ENCODE measurements at regions of chr20 and their contacts with region 1.

Region 1: GRCh38 chr20:46363800-46364634 is 42.4 kb downstream of the ELMO2 start:
- DNase-seq: peak; percentile 72 to 93 (median 81)
- ATAC-seq: peak; percentile 78 to 81 (median 79)
- H3K4me3 ChIP-seq: peak overlapping the region; percentile 81 to 88
- H3K4me3 Mint-ChIP-seq: peak overlapping the region; percentile 86 to 94 (median 92)
- H3K27ac ChIP-seq: peak overlapping the region; percentile 97
- H3K27ac Mint-ChIP-seq: peak overlapping the region; percentile 93 to 97
- H3K4me1 ChIP-seq: peaks cover 46 to 75% of the 10 kb centered on the region in 2 experiments
- H3K4me1 Mint-ChIP-seq: peaks cover 73 to 86% (median 84%) of the 10 kb centered on the region in 3 donors
- H3K27me3 ChIP-seq: no peaks in the 10 kb centered on the region
- H3K27me3 Mint-ChIP-seq: no peaks in the 10 kb centered on the region

Region 2: GRCh38 chr20:46283426-46284039 is 80.5 kb before region 1 on chr20:
- CTCF ChIA-PET with region 1: no interaction called
- POLR2A ChIA-PET with region 1: no interaction called
- DNase-seq: no peak
- ATAC-seq: no peak
- H3K4me3 ChIP-seq: no peak overlapping the region
- H3K4me3 Mint-ChIP-seq: no peak overlapping the region
- H3K27ac ChIP-seq: no peak overlapping the region
- H3K27ac Mint-ChIP-seq: no peak overlapping the region
- H3K4me1 ChIP-seq: no peaks in the 10 kb centered on the region
- H3K4me1 Mint-ChIP-seq: no peaks in the 10 kb centered on the region
- H3K27me3 ChIP-seq: peaks cover 0 to 44% of the 10 kb centered on the region in 2 experiments
- H3K27me3 Mint-ChIP-seq: peaks cover 20 to 52% of the 10 kb centered on the region in 2 donors

Region 3: GRCh38 chr20:46406199-46406985 is 42.4 kb after region 1 on chr20 and contains the start of gene ELMO2:
- CTCF ChIA-PET with region 1: interaction called in 1 of 2 experiments, 21 read pairs
- POLR2A ChIA-PET with region 1: interaction called, 4 to 7 read pairs
- DNase-seq: peak; percentile 90 to 99 (median 97)
- ATAC-seq: peak; percentile 91 to 93 (median 91)
- H3K4me3 ChIP-seq: peak within 1 kb of the TSS; percentile 83 to 87
- H3K4me3 Mint-ChIP-seq: peak within 1 kb of the TSS; percentile 87 to 96 (median 94)
- H3K27ac ChIP-seq: peak within 1 kb of the TSS; percentile 88
- H3K27ac Mint-ChIP-seq: peak within 1 kb of the TSS; percentile 91 to 94
- H3K4me1 ChIP-seq: peaks cover 36 to 60% of the 10 kb centered on the region in 2 experiments
- H3K4me1 Mint-ChIP-seq: peaks cover 68 to 73% (median 71%) of the 10 kb centered on the region in 3 donors
- H3K27me3 ChIP-seq: no peaks in the 10 kb centered on the region
- H3K27me3 Mint-ChIP-seq: no peaks in the 10 kb centered on the region
- total RNA-seq, gene ELMO2: 48.8 to 86.6 (median 54.2) TPM

Measured in T-cell (primary cell).